Heart right ventricle (tissue), 16 donors: ENCODE measurements at regions of chr6 and their contacts with region 1.

Region 1: GRCh38 chr6:101887532-101887931 is 494.0 kb downstream of the GRIK2 start:
- DNase-seq: no peak
- ATAC-seq: no peak
- H3K4me3 ChIP-seq: no peak overlapping the region
- H3K27ac ChIP-seq: no peak overlapping the region
- H3K4me1 ChIP-seq: no peaks in the 10 kb centered on the region
- H3K27me3 ChIP-seq: no peaks in the 10 kb centered on the region
- CTCF ChIP-seq: no peak

Region 2: DNA sequence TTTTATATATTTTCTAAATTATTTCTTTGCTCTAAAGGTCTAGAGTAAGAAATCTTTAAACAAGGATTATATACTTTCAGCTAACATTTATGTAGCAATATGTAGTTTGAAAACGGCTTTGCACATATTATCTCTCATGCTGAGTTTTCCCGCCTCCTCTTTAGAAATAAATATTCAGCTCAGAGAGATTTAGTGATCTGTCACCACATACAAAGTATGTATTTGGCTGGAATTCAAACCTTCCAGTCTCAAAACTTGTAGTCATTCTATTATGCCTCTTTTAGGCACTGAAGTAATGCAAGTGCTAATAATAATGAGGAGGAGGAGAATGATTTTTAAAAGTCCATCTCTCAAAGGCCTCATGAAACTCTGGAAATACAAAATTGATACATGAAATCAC is 30.9 kb after region 1 on chr6:
- intact Hi-C with region 1: loop called in 1 of 10 experiments (anchors 1 kb)
- DNase-seq: no peak
- ATAC-seq: no peak
- H3K4me3 ChIP-seq: no peak overlapping the region
- H3K27ac ChIP-seq: no peak overlapping the region
- H3K4me1 ChIP-seq: no peaks in the 10 kb centered on the region
- H3K27me3 ChIP-seq: no peaks in the 10 kb centered on the region
- CTCF ChIP-seq: no peak

Region 3: DNA sequence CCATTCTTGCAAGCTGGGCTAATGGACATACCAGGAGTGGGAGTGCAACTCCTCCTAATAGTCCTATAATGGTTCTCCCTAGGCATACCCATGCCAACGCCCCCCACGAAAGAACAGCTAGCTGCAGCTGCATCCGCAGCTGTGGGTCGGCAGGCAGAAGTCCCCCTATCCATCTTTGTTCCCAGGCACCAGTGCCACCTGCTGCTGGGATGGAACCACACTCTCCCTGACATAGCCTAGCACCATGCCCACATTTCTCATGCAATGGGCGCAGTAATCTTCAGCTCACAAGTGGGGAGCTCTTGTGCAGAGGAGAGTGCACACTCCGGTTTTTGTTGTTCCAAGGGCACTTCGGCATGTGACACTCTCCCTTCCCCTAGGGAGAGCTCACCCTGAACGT is 73.8 kb after region 1 on chr6:
- intact Hi-C with region 1: no loop called
- DNase-seq: no peak
- ATAC-seq: no peak
- H3K4me3 ChIP-seq: no peak overlapping the region
- H3K27ac ChIP-seq: no peak overlapping the region
- H3K4me1 ChIP-seq: no peaks in the 10 kb centered on the region
- H3K27me3 ChIP-seq: no peaks in the 10 kb centered on the region
- CTCF ChIP-seq: no peak